ENCODE measurements at regions of chr1 and their contacts with region 1.

Region 1: DNA sequence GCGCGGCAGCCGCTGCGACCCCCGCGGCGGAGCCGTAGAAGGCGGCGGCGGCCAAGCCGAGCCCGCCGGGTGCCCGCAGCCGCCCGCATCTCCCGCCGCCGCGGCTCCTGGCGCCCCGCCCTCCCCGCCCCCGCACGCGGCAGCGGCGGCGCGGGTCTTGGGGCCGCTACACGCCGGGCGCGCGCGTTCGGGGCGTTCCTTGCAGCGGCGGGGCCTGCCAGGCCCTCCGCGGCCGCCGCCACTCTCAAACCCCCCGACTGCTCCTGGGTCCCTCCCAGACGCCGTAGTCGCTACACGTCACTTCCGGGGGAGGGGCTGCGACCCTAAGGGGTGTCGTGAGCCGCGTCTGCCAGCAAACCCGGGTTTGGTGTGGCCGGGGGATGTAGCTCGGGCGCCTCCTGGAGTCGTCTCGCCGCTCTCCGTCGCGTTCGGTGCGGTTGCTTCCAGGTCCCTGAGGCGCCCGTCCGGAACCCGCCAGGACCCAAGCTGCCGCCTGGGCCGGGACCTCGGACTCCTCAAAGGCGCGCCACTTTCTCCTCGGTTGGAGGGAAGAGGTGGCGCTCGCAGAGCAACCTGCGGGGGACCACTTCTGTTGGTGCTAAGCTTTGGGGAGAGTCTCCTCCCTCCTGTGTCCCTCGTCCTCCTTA is at the start of gene ELK4:
- DNase-seq: peak; percentile 99
- H3K4me3 ChIP-seq: peak within 1 kb of the TSS; percentile 72 to 87
- H3K4me3 Mint-ChIP-seq: peak within 1 kb of the TSS; percentile 92 to 99 (median 96)
- H3K27ac ChIP-seq: peak within 1 kb of the TSS; percentile 83
- H3K27ac Mint-ChIP-seq: peak within 1 kb of the TSS; percentile 92 to 99 (median 98)
- H3K4me1 ChIP-seq: peaks cover 47% of the 10 kb centered on the region
- H3K4me1 Mint-ChIP-seq: peaks cover 23 to 50% (median 38%) of the 10 kb centered on the region in 4 donors
- H3K27me3 ChIP-seq: no peaks in the 10 kb centered on the region
- H3K27me3 Mint-ChIP-seq: no peaks in the 10 kb centered on the region
- total RNA-seq, gene ELK4: 166 to 194 TPM

Region 2: DNA sequence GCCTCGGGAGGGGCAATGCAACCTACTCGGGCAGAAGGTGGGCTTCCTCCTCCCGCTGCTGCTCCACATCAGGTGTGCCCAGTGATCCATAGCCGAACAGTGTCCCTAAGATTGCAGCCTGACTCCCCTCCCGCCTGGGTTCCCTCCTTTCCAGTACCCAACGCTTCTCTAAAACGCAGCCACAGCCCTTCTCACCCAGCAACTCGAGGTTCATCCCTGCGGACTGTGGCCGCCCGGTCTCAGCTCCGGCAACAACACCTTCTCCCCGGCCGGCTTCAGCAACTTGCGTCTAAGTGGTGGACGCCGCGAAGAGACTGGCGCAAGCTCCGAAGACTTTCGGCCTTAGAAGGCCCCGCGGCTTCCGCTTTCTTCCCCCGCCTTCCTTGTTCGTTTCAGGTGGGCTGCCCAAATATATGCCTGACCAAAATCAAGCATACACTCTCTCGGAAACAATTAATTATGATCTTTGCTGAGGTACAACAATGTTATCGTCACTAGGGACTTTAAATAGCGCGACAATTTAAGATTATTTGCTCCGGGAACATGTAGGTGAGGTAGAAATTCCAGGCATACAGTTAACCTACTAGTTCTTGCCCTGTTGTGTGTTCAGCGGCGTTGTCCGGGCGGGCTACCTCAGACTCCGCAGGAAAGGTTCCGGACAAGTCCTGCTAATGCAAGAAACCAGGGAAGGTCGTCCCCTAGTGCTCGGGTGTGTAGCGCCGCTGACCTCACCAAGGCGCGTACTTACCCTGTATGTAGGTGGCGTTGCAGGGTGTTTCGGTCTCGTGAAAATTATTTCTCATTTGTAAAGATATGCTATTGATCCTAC is 510.0 kb before region 1 on chr1 and contains the start of gene RBBP5:
- CTCF ChIA-PET with region 1: interaction called, 5 read pairs
- POLR2A ChIA-PET with region 1: interaction called, 10 read pairs
- intact Hi-C with region 1: loop called (anchors 2 kb)
- DNase-seq: peak; percentile 94 to 98 (median 95)
- H3K4me3 ChIP-seq: peak within 1 kb of the TSS; percentile 76 to 97
- H3K4me3 Mint-ChIP-seq: peak within 1 kb of the TSS; percentile 92 to 99 (median 98)
- H3K27ac ChIP-seq: peak within 1 kb of the TSS; percentile 90
- H3K27ac Mint-ChIP-seq: peak within 1 kb of the TSS; percentile 95 to 100 (median 100)
- H3K4me1 ChIP-seq: peaks cover 41% of the 10 kb centered on the region
- H3K4me1 Mint-ChIP-seq: peaks cover 31 to 59% (median 44%) of the 10 kb centered on the region in 4 donors
- H3K27me3 ChIP-seq: no peaks in the 10 kb centered on the region
- H3K27me3 Mint-ChIP-seq: no peaks in the 10 kb centered on the region
- total RNA-seq, gene RBBP5: 32.4 to 32.9 TPM

Region 3: GRCh38 chr1:205335643-205336091 is 296.2 kb before region 1 on chr1:
- CTCF ChIA-PET with region 1: interaction called, 3 read pairs
- POLR2A ChIA-PET with region 1: no interaction called
- intact Hi-C with region 1: loop called (anchors 10 kb)
- DNase-seq: peak; percentile 68 to 72 (median 70)
- H3K4me3 ChIP-seq: no peak overlapping the region
- H3K4me3 Mint-ChIP-seq: no peak overlapping the region
- H3K27ac ChIP-seq: no peak overlapping the region
- H3K27ac Mint-ChIP-seq: no peak overlapping the region
- H3K4me1 ChIP-seq: no peaks in the 10 kb centered on the region
- H3K4me1 Mint-ChIP-seq: peaks cover 0 to 2% (median 0%) of the 10 kb centered on the region in 4 donors
- H3K27me3 ChIP-seq: no peaks in the 10 kb centered on the region
- H3K27me3 Mint-ChIP-seq: peaks cover 0 to 2% of the 10 kb centered on the region in 2 donors

Region 4: GRCh38 chr1:205591522-205592351 is 40.1 kb before region 1 on chr1:
- CTCF ChIA-PET with region 1: interaction called, 333 read pairs
- POLR2A ChIA-PET with region 1: interaction called, 189 read pairs
- intact Hi-C with region 1: loop called (anchors 1 kb)
- DNase-seq: peak; percentile 85 to 89 (median 86)
- H3K4me3 ChIP-seq: peak overlapping the region in 1 of 2 donors; percentile 61
- H3K4me3 Mint-ChIP-seq: peak overlapping the region; percentile 87 to 93 (median 90)
- H3K27ac ChIP-seq: peak overlapping the region; percentile 52
- H3K27ac Mint-ChIP-seq: peak overlapping the region; percentile 82 to 96 (median 89)
- H3K4me1 ChIP-seq: peaks cover 21% of the 10 kb centered on the region
- H3K4me1 Mint-ChIP-seq: peaks cover 17 to 34% (median 25%) of the 10 kb centered on the region in 4 donors
- H3K27me3 ChIP-seq: no peaks in the 10 kb centered on the region
- H3K27me3 Mint-ChIP-seq: no peaks in the 10 kb centered on the region

Region 5: GRCh38 chr1:205750138-205751035 is 118.5 kb after region 1 on chr1 and contains the start of gene NUCKS1:
- CTCF ChIA-PET with region 1: interaction called, 4 read pairs
- POLR2A ChIA-PET with region 1: interaction called, 36 read pairs
- intact Hi-C with region 1: loop called (anchors 1 kb)
- DNase-seq: peak; percentile 94 to 99 (median 98)
- H3K4me3 ChIP-seq: peak within 1 kb of the TSS; percentile 83 to 91
- H3K4me3 Mint-ChIP-seq: peak within 1 kb of the TSS; percentile 95 to 99 (median 98)
- H3K27ac ChIP-seq: peak within 1 kb of the TSS; percentile 87
- H3K27ac Mint-ChIP-seq: peak within 1 kb of the TSS; percentile 95 to 100 (median 98)
- H3K4me1 ChIP-seq: peaks cover 34% of the 10 kb centered on the region
- H3K4me1 Mint-ChIP-seq: peaks cover 25 to 57% (median 39%) of the 10 kb centered on the region in 4 donors
- H3K27me3 ChIP-seq: no peaks in the 10 kb centered on the region
- H3K27me3 Mint-ChIP-seq: peaks cover 0 to 2% of the 10 kb centered on the region in 2 donors
- total RNA-seq, gene NUCKS1: 111 to 117 TPM

Measured in CD4-positive, alpha-beta memory T cell (primary cell).